AG04449 (cell line): ENCODE measurements at regions of chr2 and their contacts with region 1.

Region 1: GRCh38 chr2:74334931-74335333 is 8.3 kb downstream of the SLC4A5 start:
- DNase-seq: peak; percentile 9
- H3K4me3 ChIP-seq: no peak overlapping the region
- CTCF ChIP-seq: peak; percentile 94

Region 2: DNA sequence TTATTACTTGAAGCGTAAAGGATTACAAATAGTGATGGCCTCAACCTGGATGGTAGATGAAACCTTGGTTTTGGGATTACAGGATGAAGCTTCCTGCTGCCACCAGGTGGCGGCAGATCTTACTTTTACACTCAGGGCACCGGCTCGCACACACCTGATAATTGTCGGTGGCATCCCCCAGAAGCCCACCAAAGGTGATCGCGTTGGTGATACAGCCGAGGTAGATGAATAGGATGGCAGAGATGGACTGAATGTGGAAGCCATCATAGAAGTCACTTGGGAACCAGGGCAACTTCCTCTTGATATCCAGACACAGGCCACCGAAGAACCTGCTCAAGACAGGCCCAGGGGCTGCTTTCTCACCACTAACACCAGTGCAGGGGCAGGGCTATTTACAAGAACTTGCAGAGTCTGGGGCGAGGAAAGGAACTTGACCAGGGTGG is 84.7 kb before region 1 on chr2:
- CTCF ChIA-PET with region 1: interaction called, 65 read pairs
- POLR2A ChIA-PET with region 1: no interaction called
- DNase-seq: no peak
- H3K4me3 ChIP-seq: no peak overlapping the region
- CTCF ChIP-seq: peak; percentile 67

Region 3: GRCh38 chr2:74316627-74317295 is 18.2 kb before region 1 on chr2:
- CTCF ChIA-PET with region 1: interaction called, 38 read pairs
- POLR2A ChIA-PET with region 1: no interaction called
- DNase-seq: no peak
- H3K4me3 ChIP-seq: no peak overlapping the region
- CTCF ChIP-seq: no peak

Region 4: DNA sequence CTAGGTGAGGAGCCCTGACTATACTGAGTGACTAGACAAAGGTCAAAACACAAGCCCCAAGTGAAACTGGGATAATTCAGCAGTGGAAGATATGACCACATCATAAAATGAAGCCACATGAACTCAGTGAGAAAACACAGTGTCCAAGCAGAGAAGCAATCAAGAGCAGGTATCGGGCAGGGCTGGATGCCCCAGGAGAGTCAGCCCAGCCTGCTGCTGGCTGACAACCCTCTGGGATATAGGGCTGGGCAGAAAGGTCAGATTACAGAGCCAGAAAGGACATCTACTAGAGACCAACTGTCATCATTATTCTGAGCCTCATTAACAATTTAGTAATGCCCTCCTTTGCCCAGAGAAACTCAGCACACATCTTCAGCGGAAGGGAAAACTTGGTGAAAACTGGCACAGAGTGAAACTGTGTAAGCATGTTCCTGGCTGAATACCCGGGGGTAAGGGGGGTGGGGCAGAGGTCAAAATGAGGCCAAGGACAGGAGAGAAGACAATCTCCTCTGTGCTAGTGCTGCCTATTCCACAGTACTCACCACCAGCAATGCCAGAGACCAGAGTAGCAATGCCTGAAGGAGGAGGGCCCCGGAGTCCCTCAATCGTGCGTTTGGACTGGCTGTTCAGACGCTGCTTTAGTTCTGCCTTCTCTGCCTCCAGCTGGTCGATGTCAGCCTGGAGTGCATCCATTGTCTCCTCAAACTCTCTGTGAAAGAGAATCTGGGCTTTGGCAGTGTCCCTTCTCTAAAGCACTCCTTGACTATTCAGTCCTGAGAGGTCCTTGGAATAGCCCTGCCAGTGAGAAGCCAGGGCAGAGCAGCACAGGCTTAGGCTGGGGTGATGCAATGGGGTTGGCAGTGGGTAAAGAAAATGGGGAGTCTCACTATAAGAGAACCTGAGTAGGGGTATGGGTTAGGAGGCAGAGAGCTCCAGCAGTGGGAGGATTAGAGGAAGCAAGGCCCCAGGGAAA is 29.9 kb after region 1 on chr2:
- CTCF ChIA-PET with region 1: interaction called, 205 read pairs
- POLR2A ChIA-PET with region 1: no interaction called
- DNase-seq: no peak
- H3K4me3 ChIP-seq: no peak overlapping the region
- CTCF ChIP-seq: no peak

Region 5: DNA sequence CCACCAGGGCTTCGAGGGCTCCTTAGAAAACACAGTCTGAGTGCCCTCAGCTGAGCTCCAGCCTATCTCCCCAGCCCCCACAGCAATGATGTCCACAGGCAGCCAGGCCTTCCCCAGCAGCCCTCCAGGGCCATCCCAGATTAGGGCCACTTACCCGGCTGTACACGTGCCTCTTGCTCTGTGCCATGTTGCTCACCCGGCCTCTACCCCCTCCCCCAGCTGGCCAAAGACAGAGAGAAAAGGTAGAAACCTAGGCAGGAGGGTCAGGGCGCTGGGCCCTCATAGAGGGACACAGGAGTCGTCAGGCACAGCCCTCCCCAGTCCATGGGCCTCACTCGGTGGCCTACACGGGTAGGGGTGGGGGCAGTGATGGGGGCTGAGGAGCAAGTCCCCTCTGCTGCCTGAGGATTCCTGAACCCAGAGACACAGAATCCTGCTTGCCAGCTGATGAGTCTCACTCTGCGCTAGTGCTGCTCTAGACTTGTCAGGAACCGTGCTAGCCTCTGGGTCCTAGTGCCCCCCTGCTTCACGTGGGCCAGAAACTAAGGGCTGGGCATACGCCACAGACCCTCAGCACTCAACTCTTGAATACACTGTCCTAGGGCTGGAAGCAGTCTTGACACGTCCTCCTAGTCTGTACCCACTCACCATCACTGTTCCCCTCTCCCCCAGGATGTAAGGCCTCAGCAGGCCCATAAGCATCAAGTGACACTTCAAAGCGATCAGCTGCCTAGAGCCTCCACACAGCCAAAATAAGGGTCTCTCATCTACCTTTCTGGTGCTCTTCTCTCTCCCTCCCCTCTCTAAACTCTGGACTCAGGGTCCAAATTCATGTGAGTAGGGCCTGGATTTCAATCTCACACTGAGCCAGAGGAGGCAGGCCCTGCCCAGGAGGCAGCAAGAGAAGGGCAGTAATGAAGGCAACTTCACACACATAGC is 45.2 kb after region 1 on chr2 and contains the start of gene DCTN1:
- CTCF ChIA-PET with region 1: interaction called, 27 read pairs
- POLR2A ChIA-PET with region 1: no interaction called
- DNase-seq: peak; percentile 23
- H3K4me3 ChIP-seq: peak within 1 kb of the TSS; percentile 68
- CTCF ChIP-seq: no peak

Region 6: GRCh38 chr2:74399785-74400184 is 64.9 kb after region 1 on chr2:
- CTCF ChIA-PET with region 1: interaction called, 31 read pairs
- POLR2A ChIA-PET with region 1: no interaction called
- DNase-seq: no peak
- H3K4me3 ChIP-seq: no peak overlapping the region
- CTCF ChIP-seq: peak; percentile 8

Region 7: DNA sequence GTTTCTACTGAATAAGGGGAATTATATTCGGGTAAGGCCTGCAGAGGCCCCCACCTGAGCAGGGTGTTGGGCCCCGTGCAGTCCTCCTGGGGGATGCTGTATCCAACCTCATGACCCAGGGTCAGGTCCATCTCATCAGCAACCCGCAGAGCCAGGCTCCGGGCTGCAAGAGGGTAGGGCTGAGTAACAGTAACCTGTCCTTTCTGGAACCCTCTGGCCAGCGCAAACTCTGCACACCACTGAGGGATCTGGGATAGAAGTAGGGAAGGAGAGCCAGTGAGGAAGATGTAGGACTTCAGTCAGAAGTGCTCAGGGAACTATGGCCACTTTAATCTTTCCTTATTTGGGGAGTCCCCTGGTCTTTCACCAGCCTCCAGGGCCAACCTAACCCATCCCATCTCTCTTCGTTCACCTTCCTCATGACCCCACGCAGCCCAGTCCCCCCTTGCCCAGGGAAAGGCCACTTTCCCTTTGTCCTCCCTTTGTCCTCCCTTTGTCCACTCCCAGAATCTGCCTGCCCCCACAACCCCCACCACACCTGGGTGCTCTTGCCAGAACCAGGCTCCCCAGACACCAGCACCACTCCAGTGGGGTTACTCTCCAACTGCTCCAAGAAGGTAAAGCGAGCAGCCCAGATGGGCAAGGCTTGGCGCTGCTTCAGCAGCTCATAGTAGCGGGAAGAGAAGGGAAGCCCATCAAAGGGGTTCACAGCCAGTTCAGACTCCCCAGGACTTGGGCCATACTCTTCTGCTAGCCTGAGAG is 190.2 kb after region 1 on chr2:
- CTCF ChIA-PET with region 1: no interaction called
- POLR2A ChIA-PET with region 1: no interaction called
- DNase-seq: no peak
- H3K4me3 ChIP-seq: no peak overlapping the region
- CTCF ChIP-seq: no peak

Region 8: DNA sequence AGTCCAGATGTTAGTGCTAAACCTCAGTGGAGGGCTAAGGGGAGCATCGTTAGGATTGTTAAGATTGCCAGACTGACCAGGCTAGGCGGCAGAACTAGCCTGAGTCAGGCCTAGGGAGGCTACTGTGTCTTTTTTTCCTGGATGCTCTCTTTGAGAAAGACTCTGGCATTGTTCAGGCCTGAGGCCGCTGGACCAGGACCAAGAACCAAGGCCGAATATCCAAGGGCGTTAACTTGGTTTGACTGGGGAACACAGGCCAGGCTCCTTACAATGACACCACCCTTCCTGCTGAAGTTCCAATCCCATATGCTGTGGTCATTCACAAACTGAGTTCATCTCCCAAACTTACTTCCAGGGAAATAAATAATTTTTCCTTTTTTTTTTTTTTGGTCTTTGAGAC is 205.4 kb after region 1 on chr2:
- CTCF ChIA-PET with region 1: no interaction called
- POLR2A ChIA-PET with region 1: no interaction called
- DNase-seq: no peak
- H3K4me3 ChIP-seq: no peak overlapping the region
- CTCF ChIP-seq: no peak

Region 9: DNA sequence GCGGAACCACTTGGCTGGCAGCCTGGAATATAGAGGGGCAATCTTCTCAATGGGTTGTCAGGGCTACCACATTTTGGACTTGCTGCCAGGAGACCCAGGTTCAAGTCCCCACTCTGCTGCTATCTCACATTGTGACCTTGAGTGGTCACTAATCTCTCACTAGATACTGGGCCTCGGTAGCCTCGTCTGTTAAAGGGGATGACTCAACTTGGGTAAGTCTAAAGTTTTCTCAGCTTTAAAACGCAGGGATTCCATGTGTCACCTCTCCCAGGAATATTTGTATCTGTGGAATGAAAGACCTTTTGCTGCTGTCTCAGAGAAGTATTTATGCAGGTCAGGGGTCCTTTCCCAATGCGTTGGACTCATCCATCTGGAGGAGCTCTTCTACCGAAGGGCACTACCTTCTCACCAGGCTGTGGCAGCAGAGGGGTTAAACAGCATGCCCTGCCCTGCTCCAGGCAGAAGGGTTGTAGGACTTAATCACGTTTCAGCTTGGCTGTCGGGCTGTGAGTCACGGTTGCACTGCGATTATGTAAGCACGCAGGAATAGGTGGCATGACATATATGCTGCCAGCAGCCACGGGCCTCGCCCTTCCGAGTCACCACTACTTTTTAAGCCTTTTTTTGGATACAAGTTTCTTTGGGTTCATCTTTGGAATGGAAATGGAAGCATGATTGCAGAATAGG is 405.6 kb after region 1 on chr2:
- CTCF ChIA-PET with region 1: no interaction called
- POLR2A ChIA-PET with region 1: no interaction called
- DNase-seq: peak; percentile 94
- H3K4me3 ChIP-seq: no peak overlapping the region; the same call in none of the 2 replicates
- CTCF ChIP-seq: no peak